ENCODE measurements at regions of chr16 and their contacts with region 1.

Region 1: DNA sequence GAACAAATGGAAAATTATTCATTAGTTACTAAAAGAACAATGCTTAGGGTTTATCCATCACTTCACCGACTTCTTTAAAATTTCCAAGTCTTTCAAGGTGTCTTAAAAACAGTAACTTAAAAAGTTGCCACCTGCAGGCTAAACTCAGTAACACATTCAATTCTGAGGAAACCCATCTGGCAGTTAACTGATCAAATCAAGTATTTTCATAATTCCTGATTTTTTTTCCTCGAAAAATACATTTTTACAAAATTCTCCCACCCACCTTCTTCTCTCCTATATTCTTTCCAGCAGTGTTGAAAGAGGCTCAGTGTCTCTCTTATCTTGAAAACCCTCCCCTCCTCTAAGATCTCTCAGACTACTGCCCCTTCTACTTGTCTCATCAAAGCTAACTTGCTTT is 29.9 kb downstream of the PARN start:
- DNase-seq: peak; percentile 10
- ATAC-seq: peak; percentile 61; the same call in 1 of the 2 replicates
- H3K4me3 ChIP-seq: no peak overlapping the region
- H3K27ac ChIP-seq: no peak overlapping the region
- H3K4me1 ChIP-seq: no peaks in the 10 kb centered on the region
- H3K27me3 ChIP-seq: no peaks in the 10 kb centered on the region
- CTCF ChIP-seq: peak; percentile 23 to 59 (median 45); a peak in 5 of 6 replicates
- POLR2A ChIP-seq: no peak
- RAD21 ChIP-seq: no peak

Region 2: GRCh38 chr16:14249291-14250032 is 350.7 kb before region 1 on chr16:
- CTCF ChIA-PET with region 1: no interaction called
- POLR2A ChIA-PET with region 1: no interaction called
- RAD21 ChIA-PET with region 1: no interaction called
- intact Hi-C with region 1: loop called (anchors 2 kb)
- DNase-seq: peak; percentile 12
- ATAC-seq: peak; percentile 63
- H3K4me3 ChIP-seq: no peak overlapping the region
- H3K27ac ChIP-seq: no peak overlapping the region
- H3K4me1 ChIP-seq: no peaks in the 10 kb centered on the region
- H3K27me3 ChIP-seq: no peaks in the 10 kb centered on the region
- CTCF ChIP-seq: peak; percentile 48 to 98 (median 88); a peak in 5 of 6 replicates
- POLR2A ChIP-seq: no peak
- RAD21 ChIP-seq: peak; percentile 74

Region 3: GRCh38 chr16:14549789-14550153 is 50.4 kb before region 1 on chr16:
- CTCF ChIA-PET with region 1: no interaction called
- POLR2A ChIA-PET with region 1: no interaction called
- RAD21 ChIA-PET with region 1: no interaction called
- intact Hi-C with region 1: loop called (anchors 10 kb)
- DNase-seq: no peak
- ATAC-seq: no peak
- H3K4me3 ChIP-seq: no peak overlapping the region
- H3K27ac ChIP-seq: no peak overlapping the region
- H3K4me1 ChIP-seq: no peaks in the 10 kb centered on the region
- H3K27me3 ChIP-seq: no peaks in the 10 kb centered on the region
- CTCF ChIP-seq: no peak
- POLR2A ChIP-seq: no peak
- RAD21 ChIP-seq: no peak

Measured in HCT116 (cell line).